Ovary (tissue), 10 donors: ENCODE measurements at regions of chr17 and their contacts with region 1.

Region 1: GRCh38 chr17:10618202-10618635 is 38.9 kb downstream of the MYH3 start:
- DNase-seq: peak; percentile 43 to 74 (median 54)
- H3K4me3 ChIP-seq: no peak overlapping the region
- H3K27ac ChIP-seq: no peak overlapping the region
- H3K4me1 ChIP-seq: no peaks in the 10 kb centered on the region
- H3K27me3 ChIP-seq: no peaks in the 10 kb centered on the region
- CTCF ChIP-seq: peak; percentile 38 to 64 (median 44)
- EP300 ChIP-seq: no peak
- POLR2A ChIP-seq: no peak

Region 2: GRCh38 chr17:9729034-9729650 is 889.1 kb before region 1 on chr17:
- intact Hi-C with region 1: loop called in 1 of 4 experiments (anchors 10 kb)
- DNase-seq: no peak
- H3K4me3 ChIP-seq: no peak overlapping the region
- H3K27ac ChIP-seq: no peak overlapping the region
- H3K4me1 ChIP-seq: no peaks in the 10 kb centered on the region
- H3K27me3 ChIP-seq: no peaks in the 10 kb centered on the region
- CTCF ChIP-seq: peak; percentile 21 to 86 (median 75)
- EP300 ChIP-seq: no peak
- POLR2A ChIP-seq: no peak

Region 3: GRCh38 chr17:9912121-9913099 is 705.8 kb before region 1 on chr17:
- intact Hi-C with region 1: loop called in 1 of 4 experiments (anchors 10 kb)
- DNase-seq: no peak
- H3K4me3 ChIP-seq: no peak overlapping the region
- H3K27ac ChIP-seq: no peak overlapping the region
- H3K4me1 ChIP-seq: no peaks in the 10 kb centered on the region
- H3K27me3 ChIP-seq: no peaks in the 10 kb centered on the region
- CTCF ChIP-seq: no peak
- EP300 ChIP-seq: no peak
- POLR2A ChIP-seq: no peak

Region 4: GRCh38 chr17:9924735-9925191 is 693.5 kb before region 1 on chr17:
- intact Hi-C with region 1: loop called in 3 of 4 experiments (anchors 1 to 10 kb)
- DNase-seq: peak in 3 of 5 donors; percentile 32 to 46 (median 42)
- H3K4me3 ChIP-seq: no peak overlapping the region
- H3K27ac ChIP-seq: no peak overlapping the region
- H3K4me1 ChIP-seq: peaks cover 2% of the 10 kb centered on the region
- H3K27me3 ChIP-seq: no peaks in the 10 kb centered on the region
- CTCF ChIP-seq: peak; percentile 71 to 83 (median 81)
- EP300 ChIP-seq: no peak
- POLR2A ChIP-seq: no peak

Region 5: GRCh38 chr17:9937241-9937761 is 680.9 kb before region 1 on chr17:
- intact Hi-C with region 1: loop called in 1 of 4 experiments (anchors 10 kb)
- DNase-seq: peak in 4 of 5 donors; percentile 50 to 82 (median 62)
- H3K4me3 ChIP-seq: no peak overlapping the region
- H3K27ac ChIP-seq: no peak overlapping the region
- H3K4me1 ChIP-seq: peaks cover 4% of the 10 kb centered on the region
- H3K27me3 ChIP-seq: no peaks in the 10 kb centered on the region
- CTCF ChIP-seq: no peak
- EP300 ChIP-seq: no peak
- POLR2A ChIP-seq: no peak

Region 6: DNA sequence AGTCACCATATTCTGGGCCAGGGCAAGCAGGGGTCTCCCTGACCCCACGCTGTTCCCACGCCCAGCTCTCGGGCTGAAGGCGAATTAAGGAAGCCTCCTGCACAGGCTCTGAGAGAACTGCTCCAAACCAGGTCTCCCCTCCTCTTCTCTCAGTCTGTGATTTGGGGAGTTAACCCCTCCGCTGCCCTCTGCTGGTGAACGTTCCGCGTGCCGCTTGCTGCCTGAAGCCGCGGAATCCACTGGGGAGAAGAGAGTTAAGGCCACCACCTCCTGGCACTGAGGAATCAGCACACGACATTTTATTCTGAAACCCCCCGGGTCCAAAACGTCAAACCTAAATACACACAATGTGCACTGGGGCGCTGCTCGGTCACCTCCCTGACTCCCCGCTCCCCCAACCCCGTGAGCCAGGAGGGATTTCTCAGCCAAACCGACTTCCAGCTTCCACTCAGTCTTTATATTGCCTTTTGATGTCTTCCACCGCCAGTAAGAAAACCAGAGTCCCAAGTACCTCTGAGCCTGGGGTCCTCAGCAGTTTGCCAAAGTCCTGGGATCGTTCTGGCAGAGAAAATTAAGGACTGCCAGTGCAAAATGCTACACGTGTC is 658.7 kb before region 1 on chr17:
- intact Hi-C with region 1: loop called in 1 of 4 experiments (anchors 10 kb)
- DNase-seq: peak; percentile 29 to 71 (median 60)
- H3K4me3 ChIP-seq: no peak overlapping the region
- H3K27ac ChIP-seq: no peak overlapping the region
- H3K4me1 ChIP-seq: no peaks in the 10 kb centered on the region
- H3K27me3 ChIP-seq: no peaks in the 10 kb centered on the region
- CTCF ChIP-seq: peak; percentile 7 to 46 (median 35)
- EP300 ChIP-seq: no peak
- POLR2A ChIP-seq: no peak

Region 7: DNA sequence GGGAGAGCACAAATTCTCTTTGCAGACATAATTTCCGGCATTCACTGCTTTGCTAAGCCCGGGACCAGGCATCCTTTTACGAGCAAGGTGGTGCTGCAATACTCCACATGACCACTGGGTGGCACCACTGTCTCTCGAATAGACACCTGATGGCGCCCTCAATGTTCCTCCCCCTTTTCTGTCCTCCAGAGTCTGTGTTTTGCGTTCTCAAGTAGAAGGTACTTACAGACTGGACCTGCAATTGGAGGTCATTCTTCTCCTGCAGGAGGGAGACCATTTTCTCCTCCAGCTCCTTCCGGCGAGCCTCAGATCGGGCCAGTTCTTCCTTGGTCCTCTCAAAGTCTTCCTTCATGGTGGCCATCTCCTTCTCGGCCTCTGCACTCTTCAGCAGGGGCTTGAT is 290.6 kb before region 1 on chr17:
- intact Hi-C with region 1: loop called in 2 of 4 experiments (anchors 5 to 10 kb)
- DNase-seq: peak; percentile 54 to 87 (median 71)
- H3K4me3 ChIP-seq: no peak overlapping the region
- H3K27ac ChIP-seq: no peak overlapping the region
- H3K4me1 ChIP-seq: no peaks in the 10 kb centered on the region
- H3K27me3 ChIP-seq: no peaks in the 10 kb centered on the region
- CTCF ChIP-seq: peak; percentile 23 to 63 (median 25)
- EP300 ChIP-seq: no peak
- POLR2A ChIP-seq: no peak

Region 8: DNA sequence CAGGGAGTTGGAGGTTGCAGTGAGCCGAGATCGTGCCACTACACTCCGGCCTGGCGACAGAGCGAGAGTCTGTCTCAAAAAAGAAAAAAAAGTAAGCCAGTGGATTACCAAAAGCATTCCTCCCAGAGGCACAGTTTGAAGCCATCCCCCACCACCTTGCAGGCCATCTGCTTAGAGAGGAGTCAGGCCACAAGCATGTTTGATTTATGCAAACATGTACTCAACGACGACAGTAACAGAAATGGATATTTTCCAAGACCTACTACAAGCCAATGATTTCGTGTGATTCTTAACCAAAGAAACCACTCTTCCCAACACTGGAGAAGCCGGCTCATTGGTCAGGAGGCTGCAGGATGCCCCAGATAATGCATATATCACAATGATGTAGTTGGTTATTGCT is 280.2 kb before region 1 on chr17:
- intact Hi-C with region 1: no loop called
- DNase-seq: no peak
- H3K4me3 ChIP-seq: no peak overlapping the region
- H3K27ac ChIP-seq: no peak overlapping the region
- H3K4me1 ChIP-seq: no peaks in the 10 kb centered on the region
- H3K27me3 ChIP-seq: no peaks in the 10 kb centered on the region
- CTCF ChIP-seq: no peak
- EP300 ChIP-seq: no peak
- POLR2A ChIP-seq: no peak